Activated T-helper 1 cell treated with anti-CD3 and anti-CD28 coated beads, Interleukin-12 subunit alpha, Interleukin-12 subunit beta, Interleukin-2, Interleukin-4 antibody, amounts not matched to agents 30 ng/mL and 10 ng/mL and 1 ng/mL, durations not matched to agents 14 hours and 24 hours and 36 hours (primary cell): ENCODE measurements at regions of chr17 and their contacts with region 1.

Region 1: DNA sequence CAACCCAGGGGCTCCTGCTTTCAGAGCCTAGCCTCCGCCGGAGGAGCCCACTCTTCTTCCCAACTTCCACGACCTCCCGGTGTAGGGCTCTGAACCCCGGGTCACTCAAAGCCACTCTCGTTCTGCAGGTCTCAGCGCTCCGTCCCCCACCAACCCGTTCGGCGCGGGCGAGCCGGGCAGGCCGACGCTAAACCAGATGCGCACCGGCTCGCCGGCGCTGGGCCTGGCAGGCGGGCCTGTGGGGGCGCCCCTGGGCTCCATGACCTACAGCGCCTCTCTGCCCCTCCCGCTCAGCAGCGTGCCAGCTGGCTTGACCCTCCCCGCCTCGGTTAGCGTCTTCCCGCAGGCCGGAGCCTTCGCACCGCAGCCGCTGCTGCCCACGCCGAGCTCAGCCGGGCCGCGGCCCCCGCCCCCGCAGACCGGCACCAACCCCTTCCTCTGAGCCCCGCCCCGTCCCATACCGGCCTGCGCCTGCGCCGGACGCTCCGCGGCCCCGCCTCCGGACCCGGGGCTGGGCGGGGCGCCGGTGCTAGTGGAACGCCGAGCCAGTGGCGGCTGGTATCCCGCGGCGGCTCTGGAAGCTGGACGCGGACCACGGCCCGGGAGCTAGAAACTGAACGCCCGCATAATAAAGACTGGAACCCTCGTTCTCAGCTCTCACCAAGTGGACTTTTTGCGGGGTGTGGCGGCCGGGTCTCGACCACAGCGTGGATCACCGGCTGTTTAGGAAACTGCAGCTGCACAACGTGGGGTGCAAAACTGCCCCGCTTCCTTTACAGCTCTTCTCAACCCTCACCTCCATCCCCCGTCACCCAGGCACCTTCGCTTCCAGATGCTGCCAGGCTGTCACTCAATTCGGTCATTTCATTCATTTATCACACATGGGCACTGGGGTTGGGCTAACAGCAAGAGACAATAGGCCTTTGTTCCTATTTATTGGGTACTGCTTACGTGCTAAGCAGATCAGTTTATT is 5.0 kb upstream of the SPATA20 start:
- DNase-seq: peak; percentile 87
- H3K4me3 Mint-ChIP-seq: peak overlapping the region; percentile 64
- H3K27ac Mint-ChIP-seq: peak overlapping the region; percentile 55
- H3K4me1 Mint-ChIP-seq: peaks cover 23% of the 10 kb centered on the region
- H3K27me3 Mint-ChIP-seq: peaks cover 15% of the 10 kb centered on the region

Region 2: GRCh38 chr17:50507871-50508572 is 34.0 kb before region 1 on chr17 and contains the start of gene MYCBPAP:
- intact Hi-C with region 1: loop called (anchors 1 kb)
- DNase-seq: peak; percentile 82
- H3K4me3 Mint-ChIP-seq: peak within 1 kb of the TSS; percentile 91
- H3K27ac Mint-ChIP-seq: peak within 1 kb of the TSS; percentile 91
- H3K4me1 Mint-ChIP-seq: peaks cover 62% of the 10 kb centered on the region
- H3K27me3 Mint-ChIP-seq: peaks cover 5% of the 10 kb centered on the region
- total RNA-seq, gene MYCBPAP: 2.6 and 3.8 TPM in 2 replicates

Region 3: DNA sequence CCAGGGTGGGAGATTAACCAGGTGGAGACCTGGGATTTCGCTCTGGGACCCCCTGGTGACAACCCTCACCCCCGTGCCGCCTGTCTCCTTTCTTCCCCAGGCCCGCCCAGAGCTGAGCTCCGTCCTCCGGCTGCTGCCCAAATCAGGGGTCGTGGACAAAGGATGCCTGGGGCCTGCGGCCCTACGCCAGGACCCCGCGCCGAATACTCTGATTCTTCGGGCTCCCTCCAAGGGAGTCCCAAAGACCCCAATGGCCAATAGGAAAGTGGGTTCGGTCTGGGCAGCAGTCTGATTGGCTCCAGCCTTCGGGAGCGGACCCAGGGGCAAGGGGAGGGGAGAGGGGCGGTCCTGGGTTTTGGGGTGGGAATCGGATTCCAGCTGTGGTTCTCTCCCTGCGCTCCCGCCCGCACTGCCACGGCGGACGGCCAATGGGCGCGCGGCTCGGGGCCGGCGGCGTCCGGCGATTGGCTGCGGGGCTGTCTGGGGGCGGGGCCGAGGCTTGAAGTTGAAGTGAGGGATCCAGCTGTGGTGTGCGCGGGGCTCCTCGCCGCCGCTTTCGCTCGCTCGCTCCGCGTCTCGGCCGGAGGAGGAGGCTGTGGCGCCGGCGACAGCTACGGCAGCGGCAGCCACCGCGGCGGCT is 18.3 kb after region 1 on chr17 and contains the start of gene CACNA1G:
- intact Hi-C with region 1: loop called (anchors 1 kb)
- DNase-seq: peak; percentile 87
- H3K4me3 Mint-ChIP-seq: peak within 1 kb of the TSS; percentile 70
- H3K27ac Mint-ChIP-seq: no peak within 1 kb of the TSS
- H3K4me1 Mint-ChIP-seq: peaks cover 11% of the 10 kb centered on the region
- H3K27me3 Mint-ChIP-seq: peaks cover 59% of the 10 kb centered on the region
- total RNA-seq, gene CACNA1G: 0.05 and 0.07 TPM in 2 replicates

Region 4: GRCh38 chr17:50707289-50708049 is 165.5 kb after region 1 on chr17 and contains the start of gene ANKRD40:
- intact Hi-C with region 1: loop called (anchors 1 kb)
- DNase-seq: peak; percentile 90
- H3K4me3 Mint-ChIP-seq: peak within 1 kb of the TSS; percentile 95
- H3K27ac Mint-ChIP-seq: peak within 1 kb of the TSS; percentile 97
- H3K4me1 Mint-ChIP-seq: peaks cover 40% of the 10 kb centered on the region
- H3K27me3 Mint-ChIP-seq: peaks cover 3% of the 10 kb centered on the region
- total RNA-seq, gene ANKRD40: 47.0 and 50.3 TPM in 2 replicates